ENCODE measurements at regions of chr7 and their contacts with region 1.

Region 1: GRCh38 chr7:42911454-42912447 is at the start of gene C7orf25:
- DNase-seq: peak; percentile 97 to 99
- H3K4me3 ChIP-seq: peak within 1 kb of the TSS; percentile 49
- H3K4me3 Mint-ChIP-seq: peak within 1 kb of the TSS; percentile 97
- H3K27ac Mint-ChIP-seq: peak within 1 kb of the TSS; percentile 92
- H3K4me1 ChIP-seq: 0 out of 2 replicates have a peak, but pooled peaks cover 15% of the 10 kb centered on the region
- H3K4me1 Mint-ChIP-seq: peaks cover 20% of the 10 kb centered on the region
- H3K27me3 ChIP-seq: no peaks in the 10 kb centered on the region
- H3K27me3 Mint-ChIP-seq: no peaks in the 10 kb centered on the region
- CTCF ChIP-seq: no peak
- total RNA-seq, gene C7orf25: 2.7 and 3.2 TPM in 2 replicates

Region 2: GRCh38 chr7:42886129-42886528 is 25.6 kb before region 1 on chr7:
- CTCF ChIA-PET with region 1: no interaction called
- POLR2A ChIA-PET with region 1: no interaction called
- intact Hi-C with region 1: loop called (anchors 1 kb)
- DNase-seq: no peak
- H3K4me3 ChIP-seq: no peak overlapping the region
- H3K4me3 Mint-ChIP-seq: peak overlapping the region; percentile 14
- H3K27ac Mint-ChIP-seq: no peak overlapping the region
- H3K4me1 ChIP-seq: peaks cover 9% of the 10 kb centered on the region
- H3K4me1 Mint-ChIP-seq: peaks cover 16% of the 10 kb centered on the region
- H3K27me3 ChIP-seq: no peaks in the 10 kb centered on the region
- H3K27me3 Mint-ChIP-seq: no peaks in the 10 kb centered on the region
- CTCF ChIP-seq: peak; percentile 36 to 39

Region 3: DNA sequence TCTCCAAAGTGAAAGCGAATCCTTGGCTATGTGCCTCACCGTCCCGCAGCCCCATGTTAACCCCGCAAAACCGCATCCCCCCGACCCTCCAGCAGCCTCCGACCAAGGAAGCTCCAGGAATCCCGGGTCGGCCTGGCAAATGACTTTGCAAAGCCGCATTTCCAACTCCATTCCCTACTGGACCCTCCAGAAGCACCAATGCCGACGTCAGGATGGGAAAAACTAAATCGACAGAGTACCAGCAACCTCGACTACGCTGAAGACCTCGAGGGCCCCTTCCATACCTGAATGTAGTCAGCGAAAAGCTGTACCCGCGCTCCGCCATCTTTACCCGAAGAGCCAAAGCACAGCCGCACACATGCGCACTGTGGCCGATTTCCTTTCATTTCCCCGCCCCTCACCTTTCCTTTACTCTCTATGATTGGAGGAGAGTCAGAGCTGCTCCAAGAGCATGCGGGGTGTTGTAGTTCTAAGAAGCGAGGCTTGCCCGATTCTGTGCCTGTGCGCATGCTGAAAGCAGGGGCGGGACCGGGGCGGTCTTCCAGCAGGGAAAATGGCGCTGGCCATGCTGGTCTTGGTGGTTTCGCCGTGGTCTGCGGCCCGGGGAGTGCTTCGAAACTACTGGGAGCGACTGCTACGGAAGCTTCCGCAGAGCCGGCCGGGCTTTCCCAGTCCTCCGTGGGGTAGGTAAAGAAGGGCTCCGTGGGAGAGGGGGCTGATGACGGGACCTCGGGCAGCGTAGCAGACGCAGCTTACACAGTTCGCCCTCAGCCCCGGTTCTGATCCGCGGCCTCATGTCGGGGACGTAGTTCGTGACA is 20.3 kb after region 1 on chr7 and contains the starts of genes MRPL32 and PSMA2:
- CTCF ChIA-PET with region 1: no interaction called
- POLR2A ChIA-PET with region 1: interaction called, 8 read pairs
- intact Hi-C with region 1: loop called (anchors 1 kb)
- DNase-seq: peak; percentile 96 to 97
- H3K4me3 ChIP-seq: peak within 1 kb of the TSS; percentile 90
- H3K4me3 Mint-ChIP-seq: peak within 1 kb of the TSS; percentile 95
- H3K27ac Mint-ChIP-seq: peak within 1 kb of the TSS; percentile 99
- H3K4me1 ChIP-seq: peaks cover 10% of the 10 kb centered on the region
- H3K4me1 Mint-ChIP-seq: peaks cover 14% of the 10 kb centered on the region
- H3K27me3 ChIP-seq: no peaks in the 10 kb centered on the region
- H3K27me3 Mint-ChIP-seq: no peaks in the 10 kb centered on the region
- CTCF ChIP-seq: no peak
- total RNA-seq, gene MRPL32: 61.6 and 63.6 TPM in 2 replicates
- total RNA-seq, gene PSMA2: 147 and 159 TPM in 2 replicates

Region 4: DNA sequence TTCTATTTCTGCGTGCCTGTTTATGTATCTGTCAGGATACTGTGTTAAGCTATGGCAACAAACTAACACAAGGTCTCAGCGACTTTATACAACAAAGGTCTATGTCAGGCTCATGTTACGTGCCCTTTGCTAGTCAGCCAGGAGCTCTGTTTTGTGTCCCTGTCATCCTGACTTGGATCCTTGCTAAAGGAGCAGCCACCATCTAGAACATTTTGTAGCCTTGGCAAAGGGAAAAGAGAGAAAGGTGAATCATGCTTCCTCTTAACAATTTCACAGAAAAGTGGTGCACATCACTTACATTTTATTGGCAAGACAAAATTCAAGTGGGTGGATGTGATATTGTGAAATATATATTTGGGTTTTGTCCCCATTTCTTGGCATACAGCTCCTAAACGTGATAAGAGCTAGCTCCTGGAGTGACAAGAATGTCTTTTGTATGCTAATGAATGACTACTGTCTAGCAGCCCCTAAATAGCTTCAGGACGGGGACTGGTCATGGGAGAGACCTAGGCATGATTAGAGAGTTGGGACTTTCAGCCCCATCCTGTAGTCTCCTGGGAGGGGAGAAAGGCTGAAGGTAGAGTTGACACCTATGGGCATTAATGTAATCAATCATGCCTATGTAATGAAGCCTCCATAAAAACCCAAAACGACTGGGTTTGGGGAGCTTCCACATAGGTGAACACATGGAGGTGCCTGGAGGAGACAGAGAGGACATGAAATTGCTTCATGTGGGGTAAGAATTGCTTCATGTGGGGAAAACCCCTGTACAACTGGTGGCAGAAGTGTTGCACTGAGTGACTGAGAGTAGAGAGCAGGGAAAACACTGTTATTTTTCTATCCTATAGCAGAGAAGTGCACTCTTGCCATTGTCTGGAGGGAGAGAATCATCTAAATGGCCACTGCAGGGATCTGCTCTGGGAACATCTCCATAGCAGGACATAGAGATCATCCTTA is 53.4 kb after region 1 on chr7:
- CTCF ChIA-PET with region 1: no interaction called
- POLR2A ChIA-PET with region 1: no interaction called
- intact Hi-C with region 1: no loop called
- DNase-seq: no peak
- H3K4me3 ChIP-seq: no peak overlapping the region
- H3K4me3 Mint-ChIP-seq: no peak overlapping the region
- H3K27ac Mint-ChIP-seq: no peak overlapping the region
- H3K4me1 ChIP-seq: no peaks in the 10 kb centered on the region
- H3K4me1 Mint-ChIP-seq: no peaks in the 10 kb centered on the region
- H3K27me3 ChIP-seq: no peaks in the 10 kb centered on the region
- H3K27me3 Mint-ChIP-seq: peaks cover 22% of the 10 kb centered on the region
- CTCF ChIP-seq: no peak

Region 5: DNA sequence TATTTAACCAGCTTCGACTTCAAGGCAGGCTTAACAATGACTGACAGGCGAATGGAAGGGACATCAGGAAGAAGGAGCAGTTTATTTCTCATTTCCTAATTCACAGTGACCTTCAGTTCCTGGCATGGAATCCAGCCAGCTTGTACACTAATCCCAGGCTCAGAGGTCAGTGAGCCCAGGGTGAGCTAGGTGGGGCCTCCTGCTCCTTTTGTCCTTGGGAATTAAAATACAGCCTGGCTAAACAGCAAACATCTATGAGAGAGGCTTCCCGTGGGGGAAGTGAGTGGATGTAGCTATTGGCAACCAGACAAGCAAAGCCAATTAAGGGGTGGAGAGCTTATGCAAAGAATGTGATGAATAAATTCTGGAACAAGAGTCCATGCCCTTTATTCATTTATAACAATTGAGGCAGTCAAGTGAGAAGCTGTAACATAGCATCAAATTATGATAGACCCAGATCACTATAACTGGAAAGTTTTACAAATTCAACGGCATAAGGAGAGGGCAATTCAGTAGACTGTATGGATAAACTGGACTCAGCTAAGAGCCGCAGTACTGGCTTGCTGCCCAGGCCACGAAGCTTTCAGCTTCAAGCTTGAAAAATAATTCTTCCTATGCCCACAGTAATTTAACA is 728.2 kb after region 1 on chr7:
- CTCF ChIA-PET with region 1: no interaction called
- POLR2A ChIA-PET with region 1: interaction called, 10 read pairs
- intact Hi-C with region 1: no loop called
- DNase-seq: peak in 1 of 2 experiments; percentile 26
- H3K4me3 ChIP-seq: no peak overlapping the region
- H3K4me3 Mint-ChIP-seq: no peak overlapping the region
- H3K27ac Mint-ChIP-seq: peak overlapping the region; percentile 29
- H3K4me1 ChIP-seq: no peaks in the 10 kb centered on the region
- H3K4me1 Mint-ChIP-seq: peaks cover 7% of the 10 kb centered on the region
- H3K27me3 ChIP-seq: no peaks in the 10 kb centered on the region
- H3K27me3 Mint-ChIP-seq: no peaks in the 10 kb centered on the region
- CTCF ChIP-seq: no peak